ENCODE measurements at regions of chr15 and their contacts with region 1.

Region 1: GRCh38 chr15:75723847-75724660 is 11.4 kb upstream of the CSPG4 start:
- DNase-seq: peak; percentile 81
- ATAC-seq: peak; percentile 83
- H3K4me3 ChIP-seq: peak overlapping the region in 2 of 3 experiments; percentile 22 to 60; a peak in 4 of 6 replicates
- H3K27ac ChIP-seq: peak overlapping the region; percentile 34
- H3K4me1 ChIP-seq: peaks cover 27% of the 10 kb centered on the region
- H3K27me3 ChIP-seq: peaks cover 0 to 6% of the 10 kb centered on the region in 2 experiments; a peak in 2 of 5 replicates
- CTCF ChIP-seq: no peak
- EP300 ChIP-seq: peak in 1 of 2 experiments; percentile 66; a peak in 2 of 4 replicates
- POLR2A ChIP-seq: peak in 1 of 2 experiments; percentile 59; a peak in 2 of 4 replicates
- RAD21 ChIP-seq: 0 out of 2 replicates have a peak, but pooled peaks have one; percentile 13

Region 2: DNA sequence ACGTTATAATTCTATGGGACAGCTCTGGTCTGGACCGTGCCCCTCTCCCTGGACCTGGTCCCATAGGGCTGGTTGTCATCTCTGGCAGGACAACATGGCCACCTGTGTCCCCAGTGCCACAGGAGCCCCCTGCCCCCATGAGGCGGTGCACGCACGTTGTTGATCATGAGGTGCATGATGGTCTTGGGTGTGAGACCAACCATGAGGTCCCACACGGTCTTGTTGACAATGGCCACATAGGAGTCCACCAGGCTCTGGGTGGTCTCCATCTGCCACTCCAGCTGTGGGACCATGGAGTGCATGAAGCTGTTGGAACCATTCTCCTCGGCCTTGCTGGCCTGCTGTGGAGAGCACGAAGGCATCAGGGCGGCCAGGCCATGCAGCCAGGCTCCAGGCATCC is 421.7 kb before region 1 on chr15:
- CTCF ChIA-PET with region 1: no interaction called
- POLR2A ChIA-PET with region 1: no interaction called
- in situ Hi-C with region 1: no loop called
- intact Hi-C with region 1: no loop called
- DNase-seq: no peak
- ATAC-seq: no peak
- H3K4me3 ChIP-seq: no peak overlapping the region
- H3K27ac ChIP-seq: no peak overlapping the region
- H3K4me1 ChIP-seq: no peaks in the 10 kb centered on the region
- H3K27me3 ChIP-seq: peaks cover 0 to 13% of the 10 kb centered on the region in 2 experiments; a peak in 3 of 5 replicates
- CTCF ChIP-seq: no peak
- EP300 ChIP-seq: no peak
- POLR2A ChIP-seq: no peak
- RAD21 ChIP-seq: no peak

Region 3: DNA sequence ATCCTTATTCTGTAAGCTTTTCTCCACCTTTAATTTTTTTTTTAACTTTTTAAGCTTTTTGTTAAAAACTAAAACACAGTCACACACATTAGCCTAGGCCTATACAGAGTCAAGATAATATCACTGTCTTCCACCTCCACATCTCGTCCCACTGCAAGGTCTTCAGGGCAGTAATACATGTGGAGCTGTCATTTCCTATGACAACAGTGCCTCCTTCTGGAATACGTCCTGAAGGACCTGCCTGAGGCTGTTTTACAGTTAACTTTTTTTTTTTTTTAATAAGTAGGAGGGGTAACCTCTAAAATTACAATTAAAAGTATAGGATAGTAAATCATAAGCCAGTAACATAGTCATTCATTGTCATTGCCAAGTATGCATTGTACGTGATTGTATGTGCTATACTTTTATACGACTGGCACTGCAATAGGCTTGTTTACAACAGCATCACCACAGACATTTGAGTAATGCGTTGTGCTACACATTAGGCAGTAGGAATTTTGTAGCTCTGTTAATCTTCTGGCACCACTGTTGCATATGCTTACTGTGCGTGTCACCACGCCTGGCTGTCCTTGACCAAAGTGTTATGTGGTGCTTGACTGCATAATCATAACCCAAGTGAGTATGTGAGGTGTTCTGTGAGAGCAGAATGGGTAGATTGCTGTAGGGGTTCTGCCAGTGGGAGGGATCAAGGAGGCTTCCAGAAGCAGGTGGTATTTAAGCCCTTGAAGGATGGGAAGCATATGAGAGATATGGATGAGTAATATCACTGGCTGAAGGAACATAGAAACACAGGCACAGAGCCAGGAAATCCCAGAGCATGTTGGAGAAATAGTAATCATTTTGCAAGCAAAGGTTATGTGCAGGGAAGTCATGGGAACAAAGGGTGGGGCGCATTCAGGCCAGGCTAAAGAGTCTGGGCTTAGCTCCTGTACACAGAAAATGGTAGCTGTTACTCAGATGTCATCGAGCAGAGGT is 198.0 kb after region 1 on chr15:
- CTCF ChIA-PET with region 1: no interaction called
- POLR2A ChIA-PET with region 1: no interaction called
- in situ Hi-C with region 1: loop called (anchors 10 kb)
- intact Hi-C with region 1: loop called (anchors 10 kb)
- DNase-seq: peak; percentile 51
- ATAC-seq: peak; percentile 64
- H3K4me3 ChIP-seq: no peak overlapping the region
- H3K27ac ChIP-seq: no peak overlapping the region
- H3K4me1 ChIP-seq: peaks cover 25% of the 10 kb centered on the region
- H3K27me3 ChIP-seq: no peaks in the 10 kb centered on the region; a peak in 1 of 5 replicates
- CTCF ChIP-seq: peak; percentile 55
- EP300 ChIP-seq: no peak
- POLR2A ChIP-seq: no peak
- RAD21 ChIP-seq: peak; percentile 32; the same call in 1 of the 2 replicates

Region 4: DNA sequence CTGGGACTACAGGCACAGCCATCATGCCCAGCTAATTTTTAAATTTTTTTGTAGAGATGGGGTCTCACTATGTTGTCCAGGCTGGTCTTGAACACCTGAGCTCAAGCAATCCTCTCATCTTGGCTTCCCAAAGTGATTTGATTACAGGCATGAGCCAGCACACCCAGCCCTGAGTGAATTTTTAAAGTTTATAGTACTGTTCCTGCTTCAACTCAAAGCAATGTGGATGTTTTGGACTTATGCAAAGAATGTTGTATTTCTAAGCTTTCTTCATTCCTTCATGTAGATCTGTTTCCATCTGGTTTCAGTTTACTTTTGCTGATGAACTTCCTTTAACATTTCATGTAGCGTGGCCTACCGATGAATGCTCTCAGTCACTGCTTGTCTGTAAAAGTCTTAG is 264.9 kb after region 1 on chr15:
- CTCF ChIA-PET with region 1: no interaction called
- POLR2A ChIA-PET with region 1: no interaction called
- in situ Hi-C with region 1: no loop called
- intact Hi-C with region 1: no loop called
- DNase-seq: no peak
- ATAC-seq: no peak
- H3K4me3 ChIP-seq: no peak overlapping the region
- H3K27ac ChIP-seq: no peak overlapping the region
- H3K4me1 ChIP-seq: no peaks in the 10 kb centered on the region
- H3K27me3 ChIP-seq: no peaks in the 10 kb centered on the region
- CTCF ChIP-seq: no peak
- EP300 ChIP-seq: no peak
- POLR2A ChIP-seq: no peak
- RAD21 ChIP-seq: no peak

Region 5: DNA sequence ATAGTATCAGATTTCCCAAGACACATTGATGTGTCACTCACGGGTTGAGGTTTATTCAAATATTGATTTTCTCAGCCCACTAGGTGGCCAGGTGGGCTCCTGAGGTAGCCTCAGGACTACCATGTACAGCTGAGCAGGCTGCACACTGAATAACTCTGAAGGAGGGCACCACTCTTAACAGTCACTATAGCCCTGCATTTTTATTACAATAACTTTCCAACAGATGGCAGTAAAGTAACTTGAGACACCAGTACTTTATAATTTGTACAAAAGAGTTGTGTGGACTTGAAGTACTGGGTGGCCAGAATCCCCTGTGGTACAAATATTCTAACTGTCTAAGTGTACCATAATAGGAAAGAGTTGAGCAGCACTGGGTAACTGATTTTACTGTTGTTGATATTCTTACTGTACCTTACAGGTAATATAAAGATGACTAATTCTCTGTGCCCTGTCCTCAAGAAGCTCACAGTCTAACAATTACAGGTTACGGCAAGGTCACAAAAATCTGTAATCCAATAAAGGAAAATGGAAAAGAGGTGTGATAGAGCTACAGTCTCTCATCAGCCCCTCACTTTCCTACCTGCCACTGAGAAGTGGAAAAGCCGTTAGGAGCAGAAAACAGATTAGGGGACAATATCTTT is 511.3 kb after region 1 on chr15:
- CTCF ChIA-PET with region 1: no interaction called
- POLR2A ChIA-PET with region 1: no interaction called
- in situ Hi-C with region 1: no loop called
- intact Hi-C with region 1: no loop called
- DNase-seq: peak; percentile 42
- ATAC-seq: peak; percentile 90
- H3K4me3 ChIP-seq: no peak overlapping the region
- H3K27ac ChIP-seq: peak overlapping the region; percentile 35
- H3K4me1 ChIP-seq: peaks cover 51% of the 10 kb centered on the region
- H3K27me3 ChIP-seq: no peaks in the 10 kb centered on the region
- CTCF ChIP-seq: peak; percentile 53
- EP300 ChIP-seq: no peak
- POLR2A ChIP-seq: no peak
- RAD21 ChIP-seq: peak; percentile 32; the same call in 1 of the 2 replicates